ENCODE measurements at regions of chr7 and their contacts with region 1.

Region 1: GRCh38 chr7:37031571-37032257 is 307.4 kb upstream of the AOAH start:
- DNase-seq: peak; percentile 82 to 83
- ATAC-seq: peak; percentile 97
- H3K4me3 ChIP-seq: no peak overlapping the region
- H3K27ac ChIP-seq: peak overlapping the region; percentile 96 to 97
- H3K4me1 ChIP-seq: peaks cover 2 to 5% of the 10 kb centered on the region in 2 donors
- H3K27me3 ChIP-seq: no peaks in the 10 kb centered on the region

Region 2: GRCh38 chr7:36967387-36967786 is 64.3 kb before region 1 on chr7:
- intact Hi-C with region 1: no loop called
- DNase-seq: peak in 1 of 2 donors; percentile 67
- ATAC-seq: peak; percentile 90
- H3K4me3 ChIP-seq: no peak overlapping the region
- H3K27ac ChIP-seq: no peak overlapping the region
- H3K4me1 ChIP-seq: no peaks in the 10 kb centered on the region
- H3K27me3 ChIP-seq: no peaks in the 10 kb centered on the region

Region 3: GRCh38 chr7:36986429-36987362 is 45.0 kb before region 1 on chr7:
- intact Hi-C with region 1: loop called in 1 of 2 experiments (anchors 10 kb)
- DNase-seq: peak; percentile 63 to 88
- ATAC-seq: peak; percentile 82
- H3K4me3 ChIP-seq: no peak overlapping the region
- H3K27ac ChIP-seq: no peak overlapping the region
- H3K4me1 ChIP-seq: no peaks in the 10 kb centered on the region
- H3K27me3 ChIP-seq: peaks cover 0 to 2% of the 10 kb centered on the region in 2 donors

Region 4: GRCh38 chr7:37109843-37110242 is 78.1 kb after region 1 on chr7:
- intact Hi-C with region 1: loop called in 1 of 2 experiments (anchors 10 kb)
- DNase-seq: no peak
- ATAC-seq: no peak
- H3K4me3 ChIP-seq: no peak overlapping the region
- H3K27ac ChIP-seq: no peak overlapping the region
- H3K4me1 ChIP-seq: peaks cover 0 to 3% of the 10 kb centered on the region in 2 donors
- H3K27me3 ChIP-seq: no peaks in the 10 kb centered on the region

Measured in aorta (tissue), 5 donors.